OCI-LY7 (cell line): ENCODE measurements at regions of chr1 and their contacts with region 1.

Region 1: DNA sequence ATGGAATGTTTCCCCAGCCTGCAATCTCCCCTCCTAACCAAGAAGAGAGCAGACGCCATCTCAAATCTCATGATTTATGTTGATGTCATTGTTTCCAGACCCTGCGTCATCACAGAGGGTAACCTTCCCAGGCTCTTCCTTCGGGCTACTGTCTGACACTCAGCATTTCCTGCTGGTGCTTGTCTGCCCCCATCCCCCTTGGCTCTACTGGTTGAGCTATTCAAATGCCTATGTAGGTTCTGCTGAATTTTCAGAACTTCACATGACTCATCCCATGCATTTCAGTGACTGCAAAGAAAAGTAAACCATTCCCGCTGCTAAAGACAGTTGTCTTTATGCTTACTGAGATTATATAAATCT is 24.8 kb upstream of the ITPKB start:
- DNase-seq: peak; percentile 57
- H3K4me3 ChIP-seq: peak overlapping the region; percentile 50
- H3K27ac ChIP-seq: peak overlapping the region; percentile 98
- H3K4me1 ChIP-seq: peaks cover 55% of the 10 kb centered on the region
- CTCF ChIP-seq: no peak

Region 2: DNA sequence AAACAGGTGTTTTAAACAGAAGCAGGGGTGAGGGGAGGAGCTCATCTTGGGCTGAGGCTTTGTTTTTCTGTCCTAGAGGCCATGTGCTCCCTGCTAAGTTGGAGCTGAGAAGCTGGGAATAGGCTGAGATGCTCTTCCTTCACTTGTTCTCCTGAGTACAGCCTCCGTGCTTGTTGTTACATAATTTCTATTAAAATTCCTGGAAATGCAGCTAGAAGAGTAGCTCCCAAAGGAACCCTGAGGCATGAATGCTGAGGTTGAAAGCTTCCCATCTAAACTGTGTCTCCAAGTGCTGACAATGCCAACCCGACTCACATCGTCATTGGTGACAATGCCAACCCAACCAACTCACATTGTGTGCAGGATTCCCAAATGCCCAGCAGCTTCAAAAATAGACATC is 12.2 kb before region 1 on chr1:
- CTCF ChIA-PET with region 1: interaction called, 3 read pairs
- POLR2A ChIA-PET with region 1: interaction called, 33 read pairs
- intact Hi-C with region 1: no loop called
- DNase-seq: peak; percentile 50
- H3K4me3 ChIP-seq: no peak overlapping the region
- H3K27ac ChIP-seq: no peak overlapping the region
- H3K4me1 ChIP-seq: peaks cover 44% of the 10 kb centered on the region
- CTCF ChIP-seq: no peak

Region 3: GRCh38 chr1:226814751-226815496 is 51.0 kb after region 1 on chr1:
- CTCF ChIA-PET with region 1: no interaction called
- POLR2A ChIA-PET with region 1: no interaction called
- intact Hi-C with region 1: no loop called
- DNase-seq: no peak
- H3K4me3 ChIP-seq: no peak overlapping the region
- H3K27ac ChIP-seq: no peak overlapping the region
- H3K4me1 ChIP-seq: no peaks in the 10 kb centered on the region
- CTCF ChIP-seq: no peak